ENCODE measurements at regions of chr12 and their contacts with region 1.

Region 1: DNA sequence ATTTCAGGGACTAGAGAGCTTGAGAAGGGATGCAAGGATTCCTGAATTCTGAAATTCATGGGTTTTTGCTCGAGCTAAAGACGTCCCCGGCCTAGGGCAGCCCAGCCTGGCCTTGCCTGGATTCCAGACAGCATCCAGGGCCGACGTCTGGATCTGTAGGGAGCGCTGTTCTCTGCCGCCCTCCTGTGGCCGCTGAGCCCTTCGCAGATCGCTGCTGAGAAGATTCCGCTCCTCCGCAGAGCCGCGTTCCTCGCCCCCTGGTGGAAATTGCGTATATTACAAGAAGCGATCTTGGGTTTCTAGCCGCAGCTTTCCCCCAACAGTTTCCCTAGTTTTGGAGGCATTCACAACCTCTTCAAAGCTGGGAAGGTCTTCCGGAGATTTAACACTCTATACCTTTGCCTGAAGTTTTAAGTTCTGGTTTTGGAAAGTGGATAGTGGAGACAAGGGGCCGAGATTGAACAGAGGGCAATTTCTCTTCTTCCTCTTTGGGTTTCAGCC is 5.1 kb downstream of the CISTR start:
- DNase-seq: peak; percentile 86
- H3K27ac ChIP-seq: no peak overlapping the region
- CTCF ChIP-seq: peak; percentile 100

Region 2: GRCh38 chr12:53696285-53696654 is 50.4 kb before region 1 on chr12:
- CTCF ChIA-PET with region 1: interaction called, 41 read pairs
- POLR2A ChIA-PET with region 1: no interaction called
- DNase-seq: peak; percentile 100
- H3K27ac ChIP-seq: peak overlapping the region; percentile 73
- CTCF ChIP-seq: no peak

Region 3: GRCh38 chr12:53709671-53710070 is 37.0 kb before region 1 on chr12:
- CTCF ChIA-PET with region 1: interaction called, 15 read pairs
- POLR2A ChIA-PET with region 1: no interaction called
- DNase-seq: no peak
- H3K27ac ChIP-seq: no peak overlapping the region
- CTCF ChIP-seq: no peak

Region 4: DNA sequence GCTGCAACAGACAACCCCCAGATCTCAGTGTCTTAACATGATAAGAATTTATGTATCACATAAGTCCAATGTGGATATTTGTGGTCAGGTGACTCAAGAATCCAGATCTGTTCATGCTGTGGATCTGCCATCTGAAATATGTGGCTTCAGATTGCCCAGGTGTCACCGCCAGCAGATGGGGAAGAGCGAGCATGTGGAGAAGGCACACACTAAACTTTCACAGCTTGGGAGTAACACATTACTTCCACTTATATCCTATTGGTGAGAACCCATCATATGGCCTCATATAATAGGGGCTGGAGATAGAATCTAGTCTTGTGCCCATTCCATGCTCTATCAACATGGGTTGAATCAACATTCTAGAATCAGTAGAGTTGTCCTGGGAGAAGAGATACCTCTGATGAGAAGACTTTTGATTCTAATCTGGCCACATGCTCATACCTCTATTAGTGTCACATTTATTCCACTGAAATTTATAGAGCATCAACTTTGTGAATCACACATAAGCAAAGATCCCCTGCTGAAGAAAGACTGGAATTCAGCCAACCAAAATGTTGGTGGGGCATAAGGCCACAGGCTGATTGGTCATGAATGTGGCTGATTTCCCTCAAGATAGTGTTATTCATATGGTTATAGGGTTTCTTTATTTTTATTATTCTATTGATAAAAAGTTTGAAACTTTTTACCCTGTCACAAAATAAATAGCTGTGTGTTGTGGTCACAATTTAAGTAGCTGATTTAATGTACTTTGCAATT is 13.4 kb before region 1 on chr12:
- CTCF ChIA-PET with region 1: interaction called, 31 read pairs
- POLR2A ChIA-PET with region 1: no interaction called
- DNase-seq: no peak
- H3K27ac ChIP-seq: no peak overlapping the region
- CTCF ChIP-seq: no peak

Region 5: DNA sequence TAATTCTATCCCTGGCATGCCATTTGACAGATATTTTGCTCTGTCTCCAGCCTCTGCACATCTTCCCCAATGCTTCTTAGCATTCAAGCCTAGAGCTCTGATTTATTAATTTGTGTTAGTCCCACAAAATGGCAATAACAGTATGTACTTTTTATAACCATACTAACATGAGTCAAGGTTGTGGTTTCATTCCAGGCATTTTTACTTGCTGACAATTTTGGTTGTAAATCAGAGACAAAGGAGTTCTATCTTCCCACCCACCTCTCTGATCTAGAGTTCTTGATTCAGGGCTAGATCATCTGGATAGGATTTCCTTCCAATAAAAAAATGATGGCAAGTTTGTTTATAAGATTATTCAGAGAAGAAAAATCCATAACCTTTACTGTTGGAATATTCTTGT is 23.6 kb after region 1 on chr12:
- CTCF ChIA-PET with region 1: interaction called, 12 read pairs
- POLR2A ChIA-PET with region 1: no interaction called
- DNase-seq: peak; percentile 80
- H3K27ac ChIP-seq: no peak overlapping the region
- CTCF ChIP-seq: no peak

Region 6: DNA sequence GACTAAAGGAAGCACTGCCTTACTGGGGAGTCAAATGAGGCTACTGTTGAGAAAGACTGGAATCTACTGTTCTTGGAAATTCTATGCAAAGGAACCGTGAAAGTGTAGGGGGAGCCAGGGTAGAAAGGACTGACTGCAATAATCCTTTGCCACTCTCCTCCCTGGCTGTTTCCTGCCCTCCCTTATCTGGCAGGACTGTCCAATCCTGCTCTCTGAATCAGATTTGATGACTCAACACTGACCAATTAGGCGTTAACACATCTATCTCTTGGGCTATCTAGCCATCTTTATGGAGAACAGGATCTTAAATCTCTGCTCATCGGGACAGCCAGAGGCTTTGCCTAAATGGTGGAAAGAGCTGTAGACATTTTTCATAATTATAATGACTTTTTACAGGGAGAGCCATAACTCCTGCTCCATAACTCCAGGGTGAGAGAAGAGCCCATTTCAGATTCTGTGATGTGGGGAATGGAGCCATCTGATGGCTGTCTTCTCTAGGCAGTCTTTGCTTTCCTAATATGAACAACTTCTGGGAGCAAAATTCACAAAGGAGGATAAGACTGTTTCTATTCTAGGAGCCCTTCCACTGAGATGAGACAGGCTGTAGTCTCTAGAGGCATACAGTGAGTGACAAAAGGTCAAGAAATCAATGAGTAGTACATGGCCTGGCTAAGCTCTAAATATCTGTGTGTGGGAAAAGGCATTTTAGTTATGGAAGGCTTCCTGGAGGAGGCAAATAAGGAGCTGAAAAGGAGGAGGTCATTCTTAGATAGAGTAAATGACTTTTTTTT is 74.1 kb after region 1 on chr12:
- CTCF ChIA-PET with region 1: no interaction called
- POLR2A ChIA-PET with region 1: no interaction called
- DNase-seq: peak; percentile 63
- H3K27ac ChIP-seq: no peak overlapping the region
- CTCF ChIP-seq: no peak

Measured in RWPE1 (cell line).